Activated B cell treated with CpG ODN at 0.5 μM for 24 hours (primary cell): ENCODE measurements at regions of chr1 and their contacts with region 1.

Region 1: DNA sequence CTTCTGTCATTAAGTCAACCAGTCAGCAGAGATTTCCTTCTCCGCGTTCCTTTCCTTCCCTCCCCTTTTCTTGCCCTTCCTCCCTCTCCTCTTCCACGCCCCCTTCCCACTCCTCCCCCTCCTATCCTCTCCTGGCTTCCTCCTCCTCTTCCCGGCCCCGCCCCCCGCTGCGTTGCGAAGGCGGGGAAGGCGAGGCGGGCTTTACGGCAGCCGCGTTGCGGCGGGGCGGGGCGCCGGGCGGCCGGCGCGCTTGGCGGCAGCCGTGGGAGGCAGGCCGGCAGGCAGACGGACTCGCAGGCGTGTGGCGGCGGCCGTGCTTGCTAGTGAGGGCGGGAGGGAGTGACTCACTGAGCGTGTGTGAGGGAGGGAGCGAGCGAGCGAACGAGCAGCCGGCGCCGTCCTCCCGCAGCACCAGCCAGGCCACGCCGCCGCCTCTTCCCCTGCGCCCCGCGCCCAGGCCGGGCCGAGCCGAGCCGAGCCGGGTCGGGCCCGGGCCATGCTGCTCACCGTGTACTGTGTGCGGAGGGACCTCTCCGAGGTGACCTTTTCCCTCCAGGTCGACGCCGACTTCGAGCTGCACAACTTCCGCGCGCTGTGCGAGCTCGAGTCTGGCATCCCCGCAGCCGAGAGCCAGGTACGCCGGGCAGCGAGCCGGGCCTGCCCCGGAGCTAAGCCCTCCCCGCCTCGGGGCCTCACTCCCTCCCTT is at the start of gene DDI2:
- DNase-seq: peak; percentile 93
- ATAC-seq: peak; percentile 89
- H3K4me3 Mint-ChIP-seq: peak within 1 kb of the TSS; percentile 92
- H3K27ac Mint-ChIP-seq: peak within 1 kb of the TSS; percentile 96
- H3K4me1 Mint-ChIP-seq: peaks cover 47% of the 10 kb centered on the region
- H3K27me3 Mint-ChIP-seq: no peaks in the 10 kb centered on the region
- CTCF ChIP-seq: no peak
- total RNA-seq, gene DDI2: 45.8 and 59.1 TPM in 2 replicates

Region 2: DNA sequence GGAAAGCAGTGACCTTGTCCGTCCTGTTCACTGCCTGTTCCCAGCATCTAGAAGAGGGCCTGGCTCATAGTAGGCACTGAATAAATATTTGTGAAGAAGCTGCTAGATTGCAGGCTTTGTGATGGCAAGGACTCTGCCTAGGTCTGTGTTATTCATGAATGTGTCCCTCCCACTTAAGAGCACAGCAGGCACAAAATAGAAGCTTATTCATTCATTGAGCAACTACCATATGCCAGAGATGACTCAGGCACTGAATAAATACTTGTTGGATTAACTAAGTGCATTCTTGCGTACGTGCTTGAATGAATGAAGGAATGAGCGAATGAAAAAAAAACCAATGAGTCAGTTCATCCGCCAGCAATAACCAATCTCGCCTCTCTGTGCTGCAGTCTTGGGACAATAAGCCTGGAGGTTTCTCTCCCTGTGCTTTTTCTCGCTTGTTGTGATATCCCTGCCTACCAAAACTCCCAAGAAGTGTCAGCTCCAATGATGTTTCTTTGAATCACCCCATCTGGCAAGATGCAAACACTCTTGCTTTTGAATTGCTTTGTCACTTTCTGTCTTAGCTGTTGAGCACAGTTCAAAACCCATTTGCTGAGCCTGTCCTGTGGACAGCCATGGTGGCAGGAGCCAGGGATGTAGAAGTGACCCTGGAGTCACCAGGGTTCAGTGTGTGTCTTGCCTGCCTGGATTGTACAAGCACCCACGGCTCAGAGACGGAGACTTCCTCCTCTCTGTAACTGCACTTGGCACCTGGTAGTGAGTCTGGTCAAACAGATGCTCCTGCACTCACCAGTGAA is 874.9 kb before region 1 on chr1:
- CTCF ChIA-PET with region 1: no interaction called
- POLR2A ChIA-PET with region 1: no interaction called
- intact Hi-C with region 1: no loop called
- DNase-seq: no peak
- ATAC-seq: no peak
- H3K4me3 Mint-ChIP-seq: no peak overlapping the region
- H3K27ac Mint-ChIP-seq: no peak overlapping the region
- H3K4me1 Mint-ChIP-seq: peaks cover 3% of the 10 kb centered on the region
- H3K27me3 Mint-ChIP-seq: peaks cover 26% of the 10 kb centered on the region
- CTCF ChIP-seq: no peak

Region 3: DNA sequence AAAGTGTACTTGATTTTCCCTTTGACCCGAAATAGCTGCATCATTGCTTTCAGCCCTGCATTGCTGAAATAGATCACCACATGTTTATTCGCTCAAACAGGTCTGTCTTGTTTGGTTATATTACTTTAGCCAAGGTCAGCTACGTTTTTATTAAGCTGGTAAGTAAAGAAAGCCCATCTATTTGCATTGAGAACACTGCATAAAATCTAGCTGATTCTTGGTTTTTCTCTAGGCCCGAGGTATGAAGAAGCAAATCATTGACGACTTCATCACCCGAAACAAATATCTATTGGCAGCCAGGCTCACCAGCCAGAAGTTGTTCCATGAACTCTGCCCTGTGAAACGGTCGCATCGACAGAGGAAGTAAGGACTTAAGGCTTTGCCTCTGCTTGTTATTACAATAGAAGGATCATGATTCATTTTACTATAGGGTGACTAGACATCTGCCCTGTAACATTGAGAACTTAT is 58.0 kb before region 1 on chr1:
- CTCF ChIA-PET with region 1: no interaction called
- POLR2A ChIA-PET with region 1: interaction called, 8 read pairs
- intact Hi-C with region 1: loop called (anchors 1 kb)
- DNase-seq: no peak
- ATAC-seq: no peak
- H3K4me3 Mint-ChIP-seq: no peak overlapping the region
- H3K27ac Mint-ChIP-seq: no peak overlapping the region
- H3K4me1 Mint-ChIP-seq: peaks cover 16% of the 10 kb centered on the region
- H3K27me3 Mint-ChIP-seq: no peaks in the 10 kb centered on the region
- CTCF ChIP-seq: no peak

Region 4: DNA sequence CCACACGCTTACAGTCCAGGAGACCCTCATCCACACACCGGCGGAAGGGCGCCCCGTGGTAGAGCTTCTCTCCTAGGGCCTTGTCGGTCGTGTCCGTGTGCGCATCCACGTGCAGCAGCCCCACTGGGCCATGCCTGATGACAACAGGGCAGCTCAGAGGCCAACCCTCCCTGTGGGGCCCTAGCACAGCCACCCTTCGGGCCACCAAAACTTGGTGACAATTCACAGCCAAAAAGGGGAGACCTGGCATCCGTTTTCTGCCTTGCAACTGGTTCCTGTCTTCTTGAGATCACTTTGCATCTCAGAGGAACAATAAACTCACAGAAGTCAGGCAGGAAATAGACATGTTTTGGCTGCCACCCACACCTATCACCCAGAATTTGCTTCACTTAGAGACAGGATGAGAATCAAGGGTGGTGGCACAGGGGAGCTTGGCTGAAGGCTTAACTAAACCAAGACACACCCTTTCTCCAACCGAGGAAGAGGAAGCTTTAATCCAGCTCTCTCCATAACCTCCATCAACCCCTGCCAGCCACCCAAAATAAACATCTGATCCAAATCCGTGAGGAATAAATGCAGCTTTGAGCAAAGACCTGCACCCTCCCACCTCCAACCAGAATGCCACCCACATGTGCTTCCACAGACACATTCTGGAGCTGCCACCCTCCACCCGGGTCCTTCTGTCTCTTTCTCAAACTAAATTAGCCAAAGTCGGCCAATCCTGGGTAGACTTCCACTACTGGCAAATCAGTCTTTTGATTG is 38.2 kb before region 1 on chr1:
- CTCF ChIA-PET with region 1: no interaction called
- POLR2A ChIA-PET with region 1: interaction called, 16 read pairs
- intact Hi-C with region 1: loop called (anchors 1 kb)
- DNase-seq: no peak
- ATAC-seq: peak; percentile 73
- H3K4me3 Mint-ChIP-seq: peak overlapping the region; percentile 32
- H3K27ac Mint-ChIP-seq: peak overlapping the region; percentile 88
- H3K4me1 Mint-ChIP-seq: peaks cover 38% of the 10 kb centered on the region
- H3K27me3 Mint-ChIP-seq: no peaks in the 10 kb centered on the region
- CTCF ChIP-seq: no peak

Region 5: DNA sequence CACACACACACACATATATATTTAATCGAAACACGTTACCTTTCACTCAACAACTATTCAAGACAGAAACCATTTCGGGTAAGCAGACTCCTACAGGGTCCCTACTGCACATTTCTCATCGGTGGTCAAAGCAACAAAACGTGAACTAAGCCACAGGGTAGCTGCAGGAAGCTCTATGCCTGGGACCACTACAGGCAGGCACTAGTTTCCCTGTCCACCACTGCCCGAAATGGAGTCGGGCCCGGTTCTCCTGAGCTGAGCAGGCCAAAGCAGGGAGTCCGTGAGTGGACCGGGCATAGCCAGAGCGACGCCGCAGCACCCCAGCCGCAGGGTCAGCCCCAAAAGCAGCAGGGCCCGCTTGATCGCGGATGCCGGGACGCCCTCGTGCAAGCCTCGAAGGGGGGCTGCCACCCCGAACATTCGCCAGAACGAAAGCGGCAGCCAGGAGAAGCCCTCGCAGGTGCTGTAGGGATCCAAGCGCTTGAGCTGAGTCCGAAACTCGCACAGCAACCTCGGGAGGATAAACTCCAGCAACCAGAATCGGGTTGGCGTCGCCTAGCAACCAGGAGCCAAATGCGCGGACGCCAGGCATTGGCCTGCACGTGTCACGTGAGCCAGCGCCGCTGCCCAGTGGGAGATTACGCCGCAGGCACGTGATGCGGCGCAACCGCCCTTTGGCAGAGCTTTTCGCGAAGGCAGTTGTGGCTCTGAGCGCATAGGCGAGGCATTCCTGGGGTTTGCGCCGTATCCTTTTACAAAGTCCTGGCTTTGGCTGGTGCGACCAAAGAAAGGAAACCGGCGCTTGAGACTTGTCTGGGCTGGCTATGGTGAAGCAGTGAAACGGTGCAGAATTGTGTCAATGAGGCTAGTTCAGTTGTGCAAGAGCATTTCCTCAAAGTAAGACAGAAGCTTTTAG is 14.0 kb before region 1 on chr1:
- CTCF ChIA-PET with region 1: interaction called, 3 read pairs
- POLR2A ChIA-PET with region 1: interaction called, 70 read pairs
- intact Hi-C with region 1: loop called (anchors 1 kb)
- DNase-seq: peak; percentile 87
- ATAC-seq: peak; percentile 94
- H3K4me3 Mint-ChIP-seq: peak overlapping the region; percentile 85
- H3K27ac Mint-ChIP-seq: peak overlapping the region; percentile 81
- H3K4me1 Mint-ChIP-seq: peaks cover 14% of the 10 kb centered on the region
- H3K27me3 Mint-ChIP-seq: no peaks in the 10 kb centered on the region
- CTCF ChIP-seq: no peak

Region 6: GRCh38 chr1:15684468-15685291 is 67.4 kb after region 1 on chr1:
- CTCF ChIA-PET with region 1: interaction called, 4 read pairs
- POLR2A ChIA-PET with region 1: interaction called, 30 read pairs
- intact Hi-C with region 1: loop called (anchors 1 kb)
- DNase-seq: peak; percentile 46
- ATAC-seq: peak; percentile 6
- H3K4me3 Mint-ChIP-seq: peak overlapping the region; percentile 88
- H3K27ac Mint-ChIP-seq: peak overlapping the region; percentile 81
- H3K4me1 Mint-ChIP-seq: peaks cover 70% of the 10 kb centered on the region
- H3K27me3 Mint-ChIP-seq: no peaks in the 10 kb centered on the region
- CTCF ChIP-seq: no peak

Region 7: GRCh38 chr1:15765495-15766194 is 148.3 kb after region 1 on chr1:
- CTCF ChIA-PET with region 1: no interaction called
- POLR2A ChIA-PET with region 1: no interaction called
- intact Hi-C with region 1: no loop called
- DNase-seq: no peak
- ATAC-seq: no peak
- H3K4me3 Mint-ChIP-seq: no peak overlapping the region
- H3K27ac Mint-ChIP-seq: no peak overlapping the region
- H3K4me1 Mint-ChIP-seq: no peaks in the 10 kb centered on the region
- H3K27me3 Mint-ChIP-seq: peaks cover 26% of the 10 kb centered on the region
- CTCF ChIP-seq: no peak

Region 8: DNA sequence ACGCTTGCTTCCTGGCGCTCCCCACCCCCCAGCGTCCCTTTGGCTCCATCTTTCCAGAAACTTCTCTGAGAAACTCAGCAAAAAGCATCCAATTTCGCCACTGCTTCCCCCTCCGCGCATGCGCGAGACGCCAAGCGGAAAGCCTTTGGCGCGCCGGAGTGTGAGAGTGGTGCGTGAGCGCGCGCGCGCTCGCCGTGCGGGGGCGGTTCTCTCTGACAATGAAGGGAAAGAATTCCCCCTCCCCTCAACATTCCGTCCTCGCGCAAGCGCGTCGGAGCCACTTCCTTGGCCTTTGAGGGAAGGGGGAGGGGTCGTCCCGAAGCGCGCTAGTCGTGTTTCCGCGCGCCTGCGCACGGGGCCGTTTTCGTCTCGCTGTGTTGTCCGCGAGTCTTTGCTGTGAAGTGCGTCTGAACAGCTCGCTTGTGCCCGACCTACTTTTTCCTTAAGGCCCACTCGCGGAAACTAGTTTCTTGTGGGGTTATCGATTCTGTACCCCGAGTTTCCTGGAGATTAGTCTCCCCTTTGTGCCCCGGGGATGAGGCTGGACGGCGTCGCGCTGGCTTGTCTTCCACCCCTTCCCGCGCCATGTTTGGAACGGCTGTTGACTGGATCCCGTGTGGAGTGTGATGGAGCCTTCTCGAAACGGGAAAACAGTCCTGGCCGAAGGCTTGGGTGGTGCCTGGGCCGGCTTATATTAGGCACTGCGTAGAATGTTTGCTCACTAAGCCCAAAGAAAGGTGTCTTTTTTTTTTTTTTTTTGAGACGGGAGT is 218.6 kb after region 1 on chr1:
- CTCF ChIA-PET with region 1: no interaction called
- POLR2A ChIA-PET with region 1: no interaction called
- intact Hi-C with region 1: loop called (anchors 1 kb)
- DNase-seq: peak; percentile 96
- ATAC-seq: peak; percentile 49
- H3K4me3 Mint-ChIP-seq: peak overlapping the region; percentile 90
- H3K27ac Mint-ChIP-seq: peak overlapping the region; percentile 98
- H3K4me1 Mint-ChIP-seq: peaks cover 45% of the 10 kb centered on the region
- H3K27me3 Mint-ChIP-seq: no peaks in the 10 kb centered on the region
- CTCF ChIP-seq: no peak

Region 9: DNA sequence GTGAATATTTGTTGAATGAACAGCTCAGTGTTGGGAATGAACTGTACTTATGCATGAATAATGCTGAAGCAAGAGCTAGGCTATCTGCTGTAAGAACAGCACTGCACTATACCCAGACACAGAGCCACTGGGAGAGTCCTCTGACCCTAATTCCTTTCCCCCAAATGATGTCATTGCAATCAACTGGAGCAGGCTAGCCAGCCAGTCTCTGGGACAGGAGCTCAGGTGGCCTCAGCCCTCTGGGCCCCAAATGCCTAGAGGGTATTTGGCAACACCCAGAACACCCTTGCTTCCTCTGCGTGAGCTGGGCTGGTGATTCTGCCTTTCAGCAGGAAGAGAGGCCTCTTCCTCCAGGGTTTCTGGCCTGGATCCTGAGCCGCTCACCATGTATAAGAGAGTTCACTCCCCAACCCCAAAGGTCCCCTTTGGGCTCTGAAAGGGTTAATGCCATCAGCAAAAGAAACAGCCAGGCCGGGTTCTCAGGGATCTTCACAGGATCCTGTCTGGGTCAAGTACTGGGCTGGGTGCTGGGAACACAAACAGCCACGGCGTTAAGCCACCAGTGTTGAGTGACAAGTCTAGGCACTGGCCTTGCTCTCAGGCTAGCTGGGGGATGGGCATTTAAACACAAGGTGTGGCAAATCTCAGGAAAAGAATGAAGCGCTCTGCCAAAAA is 1687.0 kb after region 1 on chr1:
- CTCF ChIA-PET with region 1: no interaction called
- POLR2A ChIA-PET with region 1: no interaction called
- intact Hi-C with region 1: no loop called
- DNase-seq: no peak
- ATAC-seq: no peak
- H3K4me3 Mint-ChIP-seq: no peak overlapping the region
- H3K27ac Mint-ChIP-seq: no peak overlapping the region
- H3K4me1 Mint-ChIP-seq: no peaks in the 10 kb centered on the region
- H3K27me3 Mint-ChIP-seq: peaks cover 19% of the 10 kb centered on the region
- CTCF ChIP-seq: no peak